Posterior vena cava (tissue), 2 donors: ENCODE measurements at regions of chr5 and their contacts with region 1.

Region 1: GRCh38 chr5:3818624-3819023 is 223.0 kb downstream of the IRX1 start:
- DNase-seq: no peak

Region 2: DNA sequence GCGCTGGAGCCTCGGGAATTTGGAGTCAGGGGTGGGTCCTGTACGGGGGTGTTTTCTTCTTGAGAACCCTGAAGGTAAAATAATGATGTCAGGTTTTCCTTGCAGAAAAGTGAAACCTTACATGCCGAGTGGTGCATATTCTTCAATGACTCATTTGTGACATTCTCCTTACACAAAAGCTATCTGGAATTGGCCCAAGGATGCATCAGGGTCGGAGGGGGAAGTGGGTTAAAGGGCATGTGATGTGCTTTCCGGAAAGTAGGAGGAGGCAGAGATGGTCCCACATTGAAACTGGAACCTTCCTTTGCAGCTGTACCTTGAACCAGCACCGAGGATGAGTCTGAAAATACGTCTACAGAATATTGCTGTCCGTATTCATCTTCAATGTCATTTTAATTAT is 1524.7 kb before region 1 on chr5:
- intact Hi-C with region 1: no loop called
- DNase-seq: no peak

Region 3: DNA sequence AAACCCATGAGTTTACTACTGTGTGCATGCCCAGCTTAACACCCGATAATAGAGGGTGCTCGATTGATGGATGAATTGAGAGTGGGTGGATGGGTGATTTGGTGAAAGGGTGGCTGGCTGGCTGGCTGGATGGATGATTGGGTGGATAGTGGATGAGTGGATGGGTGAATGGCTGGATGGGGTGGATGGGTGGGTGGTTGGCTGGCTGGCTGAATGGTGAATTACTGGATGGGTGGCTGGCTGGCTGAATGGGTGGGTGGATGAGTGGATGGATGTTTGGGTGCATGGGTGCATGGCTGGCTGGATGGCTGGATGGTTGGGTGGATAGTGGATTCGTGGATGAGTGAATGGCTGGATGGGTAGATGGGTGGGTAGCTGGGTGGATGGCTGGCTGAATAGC is 21.9 kb before region 1 on chr5:
- intact Hi-C with region 1: loop called in 1 of 2 experiments (anchors 2 kb)
- DNase-seq: no peak